ENCODE measurements at regions of chr11 and their contacts with region 1.

Region 1: DNA sequence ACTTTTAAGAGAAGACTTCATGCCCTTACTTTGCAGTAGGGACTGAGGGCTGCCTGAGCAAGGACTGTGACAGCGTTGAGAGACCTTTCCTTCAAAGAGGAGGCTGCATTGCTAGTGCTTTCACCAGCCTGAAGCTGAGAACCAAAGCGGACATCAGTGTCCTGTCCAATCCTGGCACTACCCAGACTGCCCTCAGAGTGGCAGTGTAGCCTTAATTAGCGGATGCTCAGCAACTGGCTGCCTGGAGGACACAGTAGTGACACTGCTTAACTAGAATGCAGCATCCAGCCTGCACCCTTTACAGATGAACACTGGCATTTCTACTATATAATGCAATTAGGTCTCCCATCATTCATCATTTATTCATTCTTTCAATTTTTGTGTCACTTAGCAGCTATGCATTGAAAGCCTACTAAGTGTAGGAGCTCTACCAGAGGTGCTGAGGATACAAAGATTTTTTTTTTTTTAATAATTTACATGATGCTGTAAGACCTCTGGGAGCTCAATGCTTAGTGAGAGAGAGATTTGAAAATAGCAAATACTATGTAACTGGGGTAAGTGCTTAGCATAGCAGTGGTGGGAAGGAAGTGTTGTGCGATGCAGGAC is 36.9 kb upstream of the SLC36A4 start:
- DNase-seq: peak; percentile 79
- ATAC-seq: peak; percentile 98

Region 2: DNA sequence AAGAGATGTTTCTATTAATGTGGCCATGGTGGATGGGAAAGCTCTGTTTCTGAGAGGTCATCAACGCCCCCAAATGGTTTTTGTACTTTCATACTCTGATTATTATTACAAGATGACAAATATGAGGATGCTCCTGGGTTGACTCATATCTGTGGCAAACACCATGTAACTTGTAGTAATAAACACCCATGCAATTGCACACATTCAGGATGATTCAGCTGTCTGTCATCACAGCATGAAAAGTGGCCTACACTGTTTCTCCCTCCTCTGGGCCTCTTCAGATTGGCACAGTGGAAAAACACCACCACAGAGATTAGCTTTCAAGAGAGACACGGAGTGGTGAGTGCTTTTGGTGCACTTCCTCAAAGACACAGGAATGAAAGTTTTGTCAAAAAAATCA is 179.8 kb before region 1 on chr11:
- intact Hi-C with region 1: no loop called
- DNase-seq: no peak
- ATAC-seq: no peak

Region 3: DNA sequence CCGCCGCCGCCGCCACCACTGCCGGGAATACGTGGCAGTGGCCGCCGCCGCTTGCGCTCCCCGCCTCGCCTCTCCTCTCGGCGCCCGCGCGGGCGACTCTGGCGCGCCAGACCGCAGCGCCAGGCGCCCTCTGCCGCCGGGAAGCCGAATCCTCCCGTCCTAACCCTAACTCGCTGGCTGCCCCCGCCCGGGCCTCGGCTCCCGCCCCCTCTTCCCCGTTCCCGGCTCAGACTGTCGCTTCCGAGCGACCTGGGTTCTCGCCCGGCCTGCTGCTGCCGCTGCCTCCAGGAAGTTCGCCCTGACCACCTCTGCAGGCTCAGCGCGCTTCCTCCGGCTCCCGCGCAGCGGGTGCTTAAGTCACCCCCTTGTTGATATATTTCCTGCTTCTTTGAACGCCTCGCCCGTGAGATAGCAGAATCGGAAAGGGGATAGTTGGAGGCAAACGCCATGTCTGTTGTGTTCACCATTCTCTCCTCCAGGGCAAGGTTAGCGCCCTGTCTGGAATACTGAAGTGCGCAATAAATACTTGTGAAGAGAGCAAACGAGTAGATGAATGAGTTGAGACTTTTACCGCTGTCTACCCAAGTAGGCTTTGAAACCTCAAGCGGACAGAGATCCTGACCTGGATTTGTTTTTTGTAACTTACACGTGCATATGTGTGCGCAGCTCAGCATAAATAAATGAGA is 308.7 kb after region 1 on chr11 and contains the start of gene SMCO4:
- intact Hi-C with region 1: loop called (anchors 2 kb)
- DNase-seq: peak; percentile 92
- ATAC-seq: peak; percentile 95
- total RNA-seq, gene SMCO4: 43.4 TPM